ENCODE measurements at regions of chr17 and their contacts with region 1.

Region 1: GRCh38 chr17:80755650-80756405 is 211.2 kb downstream of the RPTOR start:
- DNase-seq: no peak
- ATAC-seq: no peak
- H3K4me3 ChIP-seq: no peak overlapping the region
- H3K27ac ChIP-seq: no peak overlapping the region
- H3K4me1 ChIP-seq: peaks cover 4% of the 10 kb centered on the region; the same call in 1 of the 2 replicates
- H3K27me3 ChIP-seq: no peaks in the 10 kb centered on the region
- CTCF ChIP-seq: no peak

Region 2: GRCh38 chr17:80768389-80768788 is 12.6 kb after region 1 on chr17:
- CTCF ChIA-PET with region 1: interaction called, 11 read pairs
- POLR2A ChIA-PET with region 1: no interaction called
- in situ Hi-C with region 1: no loop called
- intact Hi-C with region 1: no loop called
- DNase-seq: no peak
- ATAC-seq: no peak
- H3K4me3 ChIP-seq: no peak overlapping the region
- H3K27ac ChIP-seq: no peak overlapping the region
- H3K4me1 ChIP-seq: no peaks in the 10 kb centered on the region
- H3K27me3 ChIP-seq: no peaks in the 10 kb centered on the region
- CTCF ChIP-seq: no peak

Region 3: GRCh38 chr17:80791758-80792284 is 36.0 kb after region 1 on chr17:
- CTCF ChIA-PET with region 1: interaction called, 4 read pairs
- POLR2A ChIA-PET with region 1: interaction called, 10 read pairs
- in situ Hi-C with region 1: no loop called
- intact Hi-C with region 1: no loop called
- DNase-seq: peak; percentile 92
- ATAC-seq: peak; percentile 94
- H3K4me3 ChIP-seq: peak overlapping the region in 1 of 2 experiments; percentile 35; a peak in 3 of 4 replicates
- H3K27ac ChIP-seq: peak overlapping the region; percentile 96
- H3K4me1 ChIP-seq: peaks cover 46% of the 10 kb centered on the region
- H3K27me3 ChIP-seq: no peaks in the 10 kb centered on the region
- CTCF ChIP-seq: no peak